ENCODE measurements at regions of chr12 and their contacts with region 1.

Region 1: DNA sequence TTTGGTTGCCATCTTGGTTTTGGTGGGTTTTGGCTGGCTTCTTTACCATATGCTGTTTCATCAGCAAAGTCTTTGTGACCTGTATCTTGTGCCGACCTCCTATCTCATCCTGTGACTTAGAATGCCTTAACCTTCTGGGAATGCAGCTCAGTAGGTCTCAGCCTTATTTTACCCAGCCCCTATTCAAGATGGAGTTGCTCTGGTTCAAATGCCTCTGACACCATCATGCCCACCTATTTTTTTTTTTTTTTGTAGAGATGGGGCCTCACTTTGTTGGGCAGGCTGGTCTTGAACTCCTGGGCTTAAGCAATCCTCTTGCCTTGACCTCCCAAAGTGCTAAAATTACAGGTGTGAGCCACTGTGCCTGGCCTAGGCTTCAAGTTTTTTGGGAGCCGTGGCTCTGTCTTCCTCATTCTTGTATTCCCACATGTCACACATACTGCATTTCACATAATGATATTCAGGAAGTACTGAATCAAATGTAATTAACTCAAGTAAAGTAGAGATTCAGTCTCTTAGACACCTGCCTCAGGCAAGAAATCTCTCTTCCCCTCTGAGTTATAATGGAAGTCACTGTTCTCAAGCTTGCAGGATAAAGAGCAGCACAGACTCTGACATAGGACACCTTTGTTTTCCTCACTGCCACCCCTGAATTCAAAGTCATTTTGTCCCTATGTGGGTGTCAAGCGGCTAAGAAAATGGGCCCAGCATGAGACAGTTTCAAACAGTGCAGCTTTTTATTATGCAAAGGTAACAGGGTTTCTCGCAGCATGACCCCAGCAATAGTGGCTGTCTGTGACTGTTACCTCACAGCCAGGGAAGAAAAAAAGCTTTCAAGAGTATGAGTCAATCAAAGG is 159.0 kb downstream of the PTPN11 start:
- DNase-seq: no peak
- ATAC-seq: no peak
- H3K4me3 ChIP-seq: no peak overlapping the region
- H3K27ac ChIP-seq: no peak overlapping the region
- H3K4me1 ChIP-seq: no peaks in the 10 kb centered on the region
- H3K27me3 ChIP-seq: no peaks in the 10 kb centered on the region
- CTCF ChIP-seq: no peak

Region 2: DNA sequence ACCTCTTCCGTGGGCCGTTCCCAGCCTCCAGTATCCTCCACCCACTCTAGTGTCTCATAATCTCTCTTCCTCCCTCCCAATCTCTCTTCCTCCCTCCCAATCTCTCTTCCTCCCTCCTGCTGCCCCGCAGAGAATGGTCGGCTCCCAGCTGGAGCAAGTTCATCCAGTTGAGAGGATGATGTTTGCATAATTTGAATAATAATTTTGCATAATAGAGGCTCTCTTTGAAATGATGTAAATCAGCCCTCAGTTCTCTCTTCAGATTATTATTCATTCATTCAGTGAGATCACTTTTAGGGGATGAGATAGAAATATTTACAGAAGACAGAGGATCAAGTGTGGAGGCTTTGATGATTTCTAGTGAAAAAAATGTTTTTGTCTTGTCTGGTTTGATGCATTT is 34.0 kb before region 1 on chr12:
- CTCF ChIA-PET with region 1: no interaction called
- POLR2A ChIA-PET with region 1: interaction called, 12 read pairs
- in situ Hi-C with region 1: no loop called
- intact Hi-C with region 1: no loop called
- DNase-seq: no peak
- ATAC-seq: no peak
- H3K4me3 ChIP-seq: no peak overlapping the region
- H3K27ac ChIP-seq: no peak overlapping the region
- H3K4me1 ChIP-seq: no peaks in the 10 kb centered on the region
- H3K27me3 ChIP-seq: no peaks in the 10 kb centered on the region
- CTCF ChIP-seq: no peak

Region 3: DNA sequence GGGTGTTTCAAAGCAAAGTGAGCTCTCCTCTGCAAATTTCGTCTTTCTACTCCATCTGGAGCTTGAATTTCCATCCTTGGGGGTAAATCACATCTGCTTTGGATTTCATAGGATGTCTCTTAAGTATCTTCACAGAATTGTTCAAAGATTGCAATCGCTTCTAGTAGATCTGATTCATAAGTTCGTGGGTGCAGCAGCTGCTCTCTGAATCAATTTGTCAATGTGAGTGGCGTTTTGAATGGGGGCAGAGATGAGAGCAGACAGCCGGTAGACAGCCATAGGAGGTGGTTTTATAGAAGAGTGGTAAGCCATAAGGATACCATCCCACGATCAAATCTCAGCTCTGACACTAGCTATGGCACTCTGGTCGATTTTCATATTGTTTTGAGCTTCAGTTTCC is 67.9 kb after region 1 on chr12:
- CTCF ChIA-PET with region 1: no interaction called
- POLR2A ChIA-PET with region 1: no interaction called
- in situ Hi-C with region 1: no loop called
- intact Hi-C with region 1: no loop called
- DNase-seq: no peak
- ATAC-seq: no peak
- H3K4me3 ChIP-seq: no peak overlapping the region
- H3K27ac ChIP-seq: no peak overlapping the region
- H3K4me1 ChIP-seq: no peaks in the 10 kb centered on the region
- H3K27me3 ChIP-seq: peaks cover 20% of the 10 kb centered on the region
- CTCF ChIP-seq: no peak

Measured in Panc1 (cell line).